ENCODE measurements at regions of chr1 and their contacts with region 1.

Region 1: DNA sequence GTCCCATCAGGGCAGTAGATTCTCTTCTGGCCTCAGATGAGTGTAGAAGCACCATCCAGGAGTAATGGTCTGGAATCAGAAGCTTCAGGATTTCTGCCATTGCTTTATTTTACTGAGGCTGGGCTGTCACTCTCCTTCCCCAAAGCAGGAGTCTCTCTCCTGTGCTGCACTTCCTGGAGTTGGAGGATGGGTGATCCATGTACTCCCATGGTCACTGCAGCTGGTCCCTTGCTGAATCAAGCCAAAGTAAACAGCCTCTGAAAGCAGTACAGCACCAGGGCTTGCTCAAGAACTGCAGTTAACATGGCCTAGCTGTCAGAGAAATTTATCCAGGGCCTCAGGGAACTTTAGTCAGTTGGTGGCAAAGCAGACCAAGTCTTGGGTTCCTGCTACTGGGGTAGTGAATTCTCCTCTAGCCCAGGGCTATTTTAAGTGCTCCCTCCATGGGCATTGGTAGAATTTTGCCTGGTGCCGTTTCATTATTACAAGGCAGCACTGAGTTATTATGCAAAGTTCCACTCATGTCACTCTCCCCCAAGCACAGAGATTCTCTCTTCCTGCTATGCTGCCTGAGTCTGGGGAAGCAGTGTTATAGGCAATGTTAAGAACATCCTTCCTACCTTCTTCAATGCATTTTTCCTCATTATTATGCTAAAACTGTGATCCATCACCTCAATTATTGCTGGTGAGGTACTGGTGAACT is 29.5 kb downstream of the DRAM2 start:
- DNase-seq: no peak
- ATAC-seq: no peak
- H3K4me3 Mint-ChIP-seq: no peak overlapping the region
- H3K27ac Mint-ChIP-seq: no peak overlapping the region
- H3K4me1 Mint-ChIP-seq: peaks cover 17% of the 10 kb centered on the region
- H3K27me3 Mint-ChIP-seq: no peaks in the 10 kb centered on the region
- CTCF ChIP-seq: no peak

Region 2: DNA sequence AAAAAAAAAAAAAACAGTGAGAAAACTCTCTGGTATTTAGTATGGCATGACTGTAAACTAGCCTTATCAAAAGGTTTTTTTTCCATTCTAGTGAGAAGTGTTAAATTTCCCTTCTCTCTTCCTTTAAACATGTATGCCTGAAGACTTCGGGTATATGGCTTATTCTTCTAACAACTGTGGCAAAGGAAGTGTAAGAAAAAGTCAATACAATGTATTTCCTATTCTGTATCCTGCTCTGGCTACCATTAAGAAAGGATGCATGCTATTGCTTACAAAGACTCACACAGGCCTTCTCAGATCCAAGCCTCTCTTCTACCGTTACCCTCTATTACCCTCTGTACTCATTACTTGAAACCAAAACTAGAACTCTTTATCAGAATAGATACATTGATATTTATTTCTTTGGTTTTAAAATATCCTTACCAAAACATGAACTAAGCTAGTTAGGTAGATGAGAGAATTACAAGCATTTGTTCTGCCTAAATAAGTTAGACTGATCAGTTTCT is 38.1 kb after region 1 on chr1:
- CTCF ChIA-PET with region 1: no interaction called
- POLR2A ChIA-PET with region 1: no interaction called
- intact Hi-C with region 1: loop called (anchors 5 kb)
- DNase-seq: no peak
- ATAC-seq: peak; percentile 40
- H3K4me3 Mint-ChIP-seq: peak overlapping the region; percentile 52
- H3K27ac Mint-ChIP-seq: peak overlapping the region; percentile 64
- H3K4me1 Mint-ChIP-seq: peaks cover 88% of the 10 kb centered on the region
- H3K27me3 Mint-ChIP-seq: no peaks in the 10 kb centered on the region
- CTCF ChIP-seq: no peak

Measured in activated B cell treated with CpG ODN at 0.5 μM for 24 hours (primary cell).